PC-9 (cell line): ENCODE measurements at regions of chr9 and their contacts with region 1.

Region 1: GRCh38 chr9:419571-420402 is 205.1 kb downstream of the DOCK8 start:
- DNase-seq: peak; percentile 68 to 97
- H3K4me3 ChIP-seq: peak overlapping the region; percentile 21; the same call in 1 of the 2 replicates
- H3K27ac ChIP-seq: peak overlapping the region; percentile 80
- H3K4me1 ChIP-seq: peaks cover 53% of the 10 kb centered on the region
- H3K27me3 ChIP-seq: no peaks in the 10 kb centered on the region
- CTCF ChIP-seq: no peak

Region 2: DNA sequence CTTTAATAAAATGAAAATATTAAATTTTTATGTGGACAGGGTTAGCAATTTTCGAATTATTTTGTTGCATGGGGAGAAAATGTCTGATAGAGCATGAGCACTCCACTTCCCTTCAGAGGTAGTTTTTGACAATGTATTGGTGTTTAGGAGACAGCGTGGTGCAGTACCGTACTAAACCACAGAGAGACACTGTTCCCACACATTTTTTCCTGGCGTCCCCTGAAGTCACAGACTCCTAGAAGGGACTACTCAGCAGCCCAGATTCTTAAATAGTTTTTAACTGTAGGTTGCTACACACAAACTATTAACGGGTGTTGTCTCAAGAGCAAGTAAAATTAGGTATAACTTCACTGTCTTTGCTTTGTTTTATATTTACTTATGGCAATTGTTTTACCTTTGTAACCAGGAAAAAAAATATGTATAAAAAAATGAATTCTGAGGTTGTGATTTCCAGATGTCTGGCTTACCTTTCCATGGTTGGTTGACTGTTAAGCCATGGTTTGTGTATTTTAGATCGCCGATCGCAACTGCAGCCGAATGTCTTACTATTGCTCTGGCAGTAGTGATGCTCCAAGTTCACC is 33.9 kb before region 1 on chr9:
- CTCF ChIA-PET with region 1: no interaction called
- POLR2A ChIA-PET with region 1: no interaction called
- intact Hi-C with region 1: no loop called
- DNase-seq: peak; percentile 47 to 52
- H3K4me3 ChIP-seq: no peak overlapping the region
- H3K27ac ChIP-seq: no peak overlapping the region
- H3K4me1 ChIP-seq: no peaks in the 10 kb centered on the region
- H3K27me3 ChIP-seq: no peaks in the 10 kb centered on the region
- CTCF ChIP-seq: peak; percentile 93

Region 3: GRCh38 chr9:447230-448025 is 27.6 kb after region 1 on chr9:
- CTCF ChIA-PET with region 1: no interaction called
- POLR2A ChIA-PET with region 1: no interaction called
- intact Hi-C with region 1: loop called (anchors 1 kb)
- DNase-seq: peak; percentile 54 to 94
- H3K4me3 ChIP-seq: no peak overlapping the region; the same call in 1 of the 2 replicates
- H3K27ac ChIP-seq: peak overlapping the region; percentile 73
- H3K4me1 ChIP-seq: peaks cover 24% of the 10 kb centered on the region
- H3K27me3 ChIP-seq: no peaks in the 10 kb centered on the region
- CTCF ChIP-seq: no peak

Region 4: GRCh38 chr9:468766-469426 is 49.1 kb after region 1 on chr9:
- CTCF ChIA-PET with region 1: no interaction called
- POLR2A ChIA-PET with region 1: no interaction called
- intact Hi-C with region 1: no loop called
- DNase-seq: peak; percentile 7 to 50
- H3K4me3 ChIP-seq: peak overlapping the region; percentile 78; the same call in 1 of the 2 replicates
- H3K27ac ChIP-seq: peak overlapping the region; percentile 67
- H3K4me1 ChIP-seq: peaks cover 29% of the 10 kb centered on the region
- H3K27me3 ChIP-seq: no peaks in the 10 kb centered on the region
- CTCF ChIP-seq: no peak

Region 5: GRCh38 chr9:557601-558201 is 137.9 kb after region 1 on chr9:
- CTCF ChIA-PET with region 1: no interaction called
- POLR2A ChIA-PET with region 1: no interaction called
- intact Hi-C with region 1: loop called (anchors 5 kb)
- DNase-seq: peak; percentile 58 to 85
- H3K4me3 ChIP-seq: no peak overlapping the region
- H3K27ac ChIP-seq: peak overlapping the region; percentile 59; the same call in 1 of the 2 replicates
- H3K4me1 ChIP-seq: peaks cover 4% of the 10 kb centered on the region; the same call in 1 of the 2 replicates
- H3K27me3 ChIP-seq: no peaks in the 10 kb centered on the region
- CTCF ChIP-seq: no peak

Region 6: DNA sequence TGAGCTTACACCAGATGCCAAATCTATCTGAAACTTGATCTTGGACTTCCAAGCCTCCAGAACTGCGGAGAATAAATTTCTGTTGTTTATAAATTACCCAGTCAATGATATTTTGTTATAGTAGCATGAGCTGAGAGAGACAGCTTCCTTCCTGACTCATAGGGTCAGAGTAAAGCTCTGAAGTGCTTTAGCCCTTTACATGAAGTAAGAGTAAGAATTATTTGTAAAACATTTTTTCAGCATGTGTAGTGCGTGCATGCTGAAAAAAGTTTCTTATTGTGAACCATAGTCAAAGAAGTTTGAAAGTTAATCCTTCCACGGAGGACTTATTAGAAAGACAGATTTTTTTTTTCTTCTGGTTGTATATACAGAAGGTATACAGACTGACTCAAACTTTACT is 802.7 kb after region 1 on chr9:
- CTCF ChIA-PET with region 1: no interaction called
- POLR2A ChIA-PET with region 1: no interaction called
- intact Hi-C with region 1: no loop called
- DNase-seq: no peak
- H3K4me3 ChIP-seq: no peak overlapping the region
- H3K27ac ChIP-seq: no peak overlapping the region
- H3K4me1 ChIP-seq: no peaks in the 10 kb centered on the region
- H3K27me3 ChIP-seq: no peaks in the 10 kb centered on the region
- CTCF ChIP-seq: no peak